ENCODE measurements at regions of chr6 and their contacts with region 1.

Region 1: GRCh38 chr6:146543211-146543939 is at the start of gene RAB32:
- DNase-seq: peak; percentile 94
- H3K4me3 ChIP-seq: peak within 1 kb of the TSS; percentile 59 to 97 (median 91)
- H3K27ac ChIP-seq: peak within 1 kb of the TSS; percentile 92
- H3K4me1 ChIP-seq: peaks cover 24% of the 10 kb centered on the region
- H3K27me3 ChIP-seq: no peaks in the 10 kb centered on the region
- CTCF ChIP-seq: peak; percentile 24 to 63
- total RNA-seq, gene RAB32: 56.5 to 79.9 TPM

Region 2: DNA sequence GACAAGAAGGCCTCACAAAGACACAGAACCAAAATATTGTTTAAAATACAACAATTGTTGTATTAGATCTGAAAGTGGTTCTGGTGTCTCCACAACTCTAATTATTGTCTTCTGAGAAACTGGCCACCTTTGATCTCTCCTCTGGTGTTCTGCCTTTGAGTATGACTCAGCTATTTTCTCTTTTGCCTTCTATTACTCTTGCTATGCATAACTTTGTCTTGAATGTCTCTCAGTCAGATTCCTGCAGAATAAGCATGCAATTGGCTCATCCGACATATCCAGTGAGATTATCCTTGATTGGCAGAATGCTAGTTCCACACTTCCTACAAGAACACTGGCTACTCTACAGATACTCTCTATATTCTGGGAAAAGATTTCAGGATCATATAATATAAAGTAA is 793.7 kb before region 1 on chr6:
- CTCF ChIA-PET with region 1: no interaction called
- dilution Hi-C with region 1: no loop called
- in situ Hi-C with region 1: no loop called
- intact Hi-C with region 1: loop called (anchors 10 kb)
- DNase-seq: peak; percentile 64
- H3K4me3 ChIP-seq: no peak overlapping the region
- H3K27ac ChIP-seq: no peak overlapping the region
- H3K4me1 ChIP-seq: peaks cover 4% of the 10 kb centered on the region
- H3K27me3 ChIP-seq: no peaks in the 10 kb centered on the region
- CTCF ChIP-seq: no peak

Region 3: DNA sequence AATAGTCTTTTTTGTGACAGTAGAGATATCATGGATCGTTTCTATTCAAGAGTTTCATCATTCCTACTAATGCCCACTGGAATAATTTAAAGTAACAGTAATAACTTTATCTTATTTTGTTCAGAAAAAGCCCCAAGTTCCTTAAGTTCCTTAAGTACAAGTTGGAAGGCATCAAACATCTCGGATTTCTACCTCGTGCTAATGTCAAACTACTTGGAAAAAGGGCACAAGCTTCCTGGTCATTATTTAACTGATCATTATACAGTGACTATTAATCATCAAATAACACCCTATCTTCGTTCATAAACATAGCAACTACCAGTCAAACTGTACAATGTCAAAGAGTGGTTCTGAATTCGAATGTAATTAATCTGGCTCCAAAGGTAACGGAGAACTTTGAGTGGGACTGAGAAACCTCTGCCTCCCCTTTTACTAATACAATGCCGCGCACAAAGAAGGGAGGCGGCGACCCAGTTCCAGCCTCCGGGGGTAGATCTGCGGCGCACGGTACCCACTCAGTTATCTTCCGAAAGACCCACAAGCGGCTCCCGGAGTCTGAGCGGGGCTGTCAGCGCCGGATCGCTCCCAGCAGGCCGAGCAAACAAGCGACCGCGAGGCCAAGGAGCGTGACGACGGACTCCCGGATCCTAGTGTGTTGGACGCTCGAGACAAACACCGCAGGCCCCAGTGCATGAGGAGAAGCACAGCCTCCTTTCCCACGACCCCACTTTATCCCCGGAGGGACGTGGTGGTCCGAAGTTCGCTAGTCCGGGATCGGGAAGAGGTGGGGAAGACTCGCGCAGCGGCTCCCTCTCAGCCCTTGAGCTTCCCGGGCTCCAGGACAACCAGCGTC is 579.9 kb before region 1 on chr6:
- CTCF ChIA-PET with region 1: no interaction called
- dilution Hi-C with region 1: no loop called
- in situ Hi-C with region 1: no loop called
- intact Hi-C with region 1: loop called (anchors 10 kb)
- DNase-seq: peak; percentile 54
- H3K4me3 ChIP-seq: peak overlapping the region; percentile 68 to 96 (median 85)
- H3K27ac ChIP-seq: peak overlapping the region; percentile 71
- H3K4me1 ChIP-seq: peaks cover 5% of the 10 kb centered on the region
- H3K27me3 ChIP-seq: no peaks in the 10 kb centered on the region
- CTCF ChIP-seq: no peak

Region 4: GRCh38 chr6:146041282-146041681 is 502.1 kb before region 1 on chr6:
- CTCF ChIA-PET with region 1: no interaction called
- dilution Hi-C with region 1: no loop called
- in situ Hi-C with region 1: no loop called
- intact Hi-C with region 1: loop called (anchors 5 kb)
- DNase-seq: peak; percentile 11
- H3K4me3 ChIP-seq: no peak overlapping the region
- H3K27ac ChIP-seq: no peak overlapping the region
- H3K4me1 ChIP-seq: no peaks in the 10 kb centered on the region
- H3K27me3 ChIP-seq: peaks cover 2% of the 10 kb centered on the region
- CTCF ChIP-seq: peak; percentile 51 to 76

Region 5: GRCh38 chr6:146103416-146104072 is 439.8 kb before region 1 on chr6:
- CTCF ChIA-PET with region 1: no interaction called
- dilution Hi-C with region 1: no loop called
- in situ Hi-C with region 1: no loop called
- intact Hi-C with region 1: no loop called
- DNase-seq: no peak
- H3K4me3 ChIP-seq: no peak overlapping the region
- H3K27ac ChIP-seq: no peak overlapping the region
- H3K4me1 ChIP-seq: no peaks in the 10 kb centered on the region
- H3K27me3 ChIP-seq: no peaks in the 10 kb centered on the region
- CTCF ChIP-seq: no peak

Region 6: DNA sequence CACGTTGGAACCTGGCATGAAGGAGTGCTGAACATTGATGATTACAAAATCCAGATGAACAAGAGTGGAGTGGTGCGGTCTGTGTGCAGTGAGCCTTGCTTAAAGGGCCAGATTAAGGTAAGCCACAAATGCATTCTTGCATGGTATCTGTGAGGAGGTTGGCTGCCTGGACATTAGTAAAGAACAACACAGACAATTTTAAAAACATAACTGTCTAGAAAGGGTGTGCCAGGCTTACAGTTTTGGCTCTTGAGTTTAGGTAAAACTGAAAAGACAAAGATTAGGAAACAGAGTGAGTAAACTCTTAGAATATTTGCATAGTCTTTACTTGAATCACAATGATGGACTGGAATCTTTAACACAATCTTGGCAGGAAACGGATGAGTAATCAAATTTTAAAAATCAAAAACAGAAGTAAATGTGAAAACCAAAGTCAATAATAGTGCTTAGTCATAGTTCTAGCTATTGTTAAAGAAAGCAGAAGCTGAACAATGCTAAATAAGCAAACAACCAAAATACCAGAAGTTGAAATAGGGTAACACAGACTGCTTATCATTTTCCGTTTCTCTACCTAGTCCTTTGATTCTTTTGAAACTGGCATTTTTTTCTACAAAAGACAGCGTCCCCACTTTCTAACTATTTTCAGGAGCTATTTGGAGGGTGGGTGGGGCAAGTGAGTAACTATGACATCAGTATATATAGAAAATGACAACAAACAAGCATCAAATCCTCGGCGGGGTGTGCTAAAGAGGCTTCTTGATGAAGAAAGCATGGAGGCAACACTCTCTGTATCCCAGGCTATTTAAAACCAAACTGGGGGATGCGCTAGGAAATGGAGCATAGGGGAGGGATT is 185.6 kb before region 1 on chr6:
- CTCF ChIA-PET with region 1: no interaction called
- dilution Hi-C with region 1: no loop called
- in situ Hi-C with region 1: no loop called
- intact Hi-C with region 1: loop called (anchors 5 kb)
- DNase-seq: peak; percentile 70
- H3K4me3 ChIP-seq: no peak overlapping the region
- H3K27ac ChIP-seq: peak overlapping the region; percentile 84
- H3K4me1 ChIP-seq: peaks cover 26% of the 10 kb centered on the region
- H3K27me3 ChIP-seq: no peaks in the 10 kb centered on the region
- CTCF ChIP-seq: no peak

Region 7: DNA sequence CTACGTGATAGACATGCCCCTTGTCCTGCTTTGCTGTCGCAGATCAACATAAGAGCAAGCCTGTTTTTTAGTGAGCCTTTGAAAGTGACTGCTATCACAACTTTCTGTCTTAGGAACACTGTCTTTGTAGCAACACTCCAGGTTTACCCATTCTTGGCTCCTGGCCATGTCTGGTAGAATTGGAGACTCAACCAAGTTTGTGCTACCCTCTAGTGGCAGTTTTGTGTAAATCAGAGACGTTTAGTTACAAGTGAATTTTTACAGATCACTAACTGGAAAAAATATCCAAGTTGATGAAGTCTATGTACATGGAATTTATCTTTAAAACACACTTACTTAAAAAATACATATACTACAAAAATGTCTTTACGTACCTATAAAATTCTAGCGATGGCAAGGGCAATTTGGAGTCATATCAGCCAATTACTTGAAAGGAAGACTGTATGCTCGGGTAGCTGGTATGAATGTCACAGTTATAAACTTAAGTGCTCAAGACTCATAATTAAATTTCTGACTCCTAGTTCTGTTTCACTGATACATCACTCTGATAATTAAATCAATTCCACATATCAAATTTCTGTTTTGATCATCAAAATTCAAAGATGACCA is 156.8 kb after region 1 on chr6:
- CTCF ChIA-PET with region 1: no interaction called
- dilution Hi-C with region 1: no loop called
- in situ Hi-C with region 1: no loop called
- intact Hi-C with region 1: loop called (anchors 1 kb)
- DNase-seq: peak; percentile 70
- H3K4me3 ChIP-seq: no peak overlapping the region
- H3K27ac ChIP-seq: no peak overlapping the region
- H3K4me1 ChIP-seq: no peaks in the 10 kb centered on the region
- H3K27me3 ChIP-seq: no peaks in the 10 kb centered on the region
- CTCF ChIP-seq: peak; percentile 70 to 74

Region 8: GRCh38 chr6:146913842-146914488 is 370.6 kb after region 1 on chr6:
- CTCF ChIA-PET with region 1: no interaction called
- dilution Hi-C with region 1: no loop called
- in situ Hi-C with region 1: no loop called
- intact Hi-C with region 1: loop called (anchors 2 kb)
- DNase-seq: peak; percentile 92
- H3K4me3 ChIP-seq: peak overlapping the region; percentile 22 to 43 (median 33)
- H3K27ac ChIP-seq: peak overlapping the region; percentile 98
- H3K4me1 ChIP-seq: peaks cover 37% of the 10 kb centered on the region
- H3K27me3 ChIP-seq: no peaks in the 10 kb centered on the region
- CTCF ChIP-seq: no peak